ENCODE measurements at regions of chr6 and their contacts with region 1.

Region 1: DNA sequence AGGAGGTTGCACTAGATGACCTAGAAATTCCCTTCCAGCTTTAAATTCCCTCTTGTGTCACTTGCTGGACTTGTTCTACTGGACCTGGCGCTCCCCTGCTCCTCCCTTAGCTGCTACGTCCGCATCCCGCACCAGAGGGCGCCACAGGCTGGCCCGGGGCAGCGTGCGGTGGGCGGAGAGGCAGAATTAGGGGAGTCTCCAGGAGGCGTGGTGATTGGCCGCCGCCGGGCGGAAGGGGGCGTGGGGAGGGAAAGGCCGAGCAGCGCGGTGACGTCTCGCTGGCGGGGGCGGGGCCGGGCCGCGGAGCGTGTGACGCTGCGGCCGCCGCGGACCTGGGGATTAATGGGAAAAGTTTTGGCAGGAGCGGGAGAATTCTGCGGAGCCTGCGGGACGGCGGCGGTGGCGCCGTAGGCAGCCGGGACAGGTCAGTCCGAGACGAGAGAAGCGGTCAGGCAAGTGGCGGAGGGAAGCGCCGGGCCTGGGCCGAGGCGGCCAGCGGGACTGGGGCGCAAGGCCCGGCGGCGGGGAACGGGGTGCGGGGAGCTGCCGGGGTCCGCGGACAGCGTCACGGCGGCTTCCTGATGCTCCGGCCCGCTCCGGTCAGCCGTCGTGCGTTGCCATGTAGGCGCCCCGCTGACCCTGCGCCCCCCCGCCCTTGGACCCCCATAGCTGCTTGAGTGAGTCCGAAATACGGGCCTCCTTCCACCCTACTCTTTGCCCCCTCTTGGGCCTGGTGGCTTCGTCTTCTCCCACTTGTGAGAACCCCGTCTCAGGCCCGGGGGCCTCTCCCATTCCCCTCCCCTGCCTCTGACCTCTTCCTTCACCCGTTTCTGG is at the start of gene PPARD:
- DNase-seq: peak; percentile 100
- H3K4me3 Mint-ChIP-seq: peak within 1 kb of the TSS; percentile 96
- H3K27ac Mint-ChIP-seq: peak within 1 kb of the TSS; percentile 91
- H3K4me1 Mint-ChIP-seq: peaks cover 40% of the 10 kb centered on the region
- H3K27me3 Mint-ChIP-seq: peaks cover 2% of the 10 kb centered on the region
- total RNA-seq, gene PPARD: 19.0 TPM in 2 replicates

Region 2: GRCh38 chr6:35370124-35370741 is 27.8 kb after region 1 on chr6:
- intact Hi-C with region 1: loop called (anchors 1 kb)
- DNase-seq: peak; percentile 78
- H3K4me3 Mint-ChIP-seq: peak overlapping the region; percentile 79
- H3K27ac Mint-ChIP-seq: peak overlapping the region; percentile 96
- H3K4me1 Mint-ChIP-seq: peaks cover 55% of the 10 kb centered on the region
- H3K27me3 Mint-ChIP-seq: no peaks in the 10 kb centered on the region

Region 3: GRCh38 chr6:35415065-35415991 is 72.9 kb after region 1 on chr6:
- intact Hi-C with region 1: loop called (anchors 2 kb)
- DNase-seq: peak; percentile 78
- H3K4me3 Mint-ChIP-seq: peak overlapping the region; percentile 39
- H3K27ac Mint-ChIP-seq: peak overlapping the region; percentile 64
- H3K4me1 Mint-ChIP-seq: peaks cover 65% of the 10 kb centered on the region
- H3K27me3 Mint-ChIP-seq: no peaks in the 10 kb centered on the region

Region 4: DNA sequence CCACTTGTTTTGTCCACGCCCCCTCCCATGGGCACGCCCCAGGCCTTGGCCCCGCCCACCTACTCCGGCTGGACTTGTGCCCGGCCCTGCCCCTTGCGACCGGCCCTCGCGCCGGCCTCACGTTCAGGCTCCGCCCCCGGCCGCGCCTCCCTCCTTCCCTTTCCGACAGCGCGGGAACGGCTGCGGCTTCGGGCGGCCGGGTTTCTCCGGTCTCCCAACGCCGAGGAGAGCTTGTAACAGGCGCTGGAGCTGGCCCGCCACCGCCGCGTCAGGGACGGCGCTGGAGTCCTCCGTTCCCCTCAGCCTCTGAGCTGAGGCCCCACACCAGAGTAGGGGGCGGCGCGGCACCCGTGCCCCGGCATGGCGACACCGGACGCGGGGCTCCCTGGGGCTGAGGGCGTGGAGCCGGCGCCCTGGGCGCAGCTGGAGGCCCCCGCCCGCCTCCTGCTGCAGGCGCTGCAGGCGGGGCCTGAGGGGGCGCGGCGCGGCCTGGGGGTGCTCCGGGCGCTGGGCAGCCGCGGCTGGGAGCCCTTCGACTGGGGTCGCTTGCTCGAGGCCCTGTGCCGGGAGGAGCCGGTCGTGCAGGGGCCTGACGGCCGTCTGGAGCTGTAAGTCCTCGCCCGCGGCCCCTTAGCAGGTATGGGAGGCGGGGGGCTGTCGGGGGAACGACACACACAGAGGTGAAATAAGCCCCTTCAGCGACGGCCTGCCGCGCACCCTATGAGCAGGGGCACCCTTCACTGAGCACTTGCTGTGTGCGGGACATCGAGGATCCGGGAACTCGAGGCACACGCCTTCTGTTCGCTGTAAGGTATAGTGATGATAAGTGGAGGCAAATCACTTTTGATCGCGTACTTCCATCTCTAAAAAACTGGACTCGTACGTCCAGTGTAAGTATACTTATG is 110.0 kb after region 1 on chr6 and contains the start of gene FANCE:
- intact Hi-C with region 1: loop called (anchors 1 kb)
- DNase-seq: peak; percentile 99
- H3K4me3 Mint-ChIP-seq: peak within 1 kb of the TSS; percentile 86
- H3K27ac Mint-ChIP-seq: peak within 1 kb of the TSS; percentile 66
- H3K4me1 Mint-ChIP-seq: peaks cover 35% of the 10 kb centered on the region
- H3K27me3 Mint-ChIP-seq: peaks cover 9% of the 10 kb centered on the region
- total RNA-seq, gene FANCE: 19.6 and 22.1 TPM in 2 replicates

Region 5: DNA sequence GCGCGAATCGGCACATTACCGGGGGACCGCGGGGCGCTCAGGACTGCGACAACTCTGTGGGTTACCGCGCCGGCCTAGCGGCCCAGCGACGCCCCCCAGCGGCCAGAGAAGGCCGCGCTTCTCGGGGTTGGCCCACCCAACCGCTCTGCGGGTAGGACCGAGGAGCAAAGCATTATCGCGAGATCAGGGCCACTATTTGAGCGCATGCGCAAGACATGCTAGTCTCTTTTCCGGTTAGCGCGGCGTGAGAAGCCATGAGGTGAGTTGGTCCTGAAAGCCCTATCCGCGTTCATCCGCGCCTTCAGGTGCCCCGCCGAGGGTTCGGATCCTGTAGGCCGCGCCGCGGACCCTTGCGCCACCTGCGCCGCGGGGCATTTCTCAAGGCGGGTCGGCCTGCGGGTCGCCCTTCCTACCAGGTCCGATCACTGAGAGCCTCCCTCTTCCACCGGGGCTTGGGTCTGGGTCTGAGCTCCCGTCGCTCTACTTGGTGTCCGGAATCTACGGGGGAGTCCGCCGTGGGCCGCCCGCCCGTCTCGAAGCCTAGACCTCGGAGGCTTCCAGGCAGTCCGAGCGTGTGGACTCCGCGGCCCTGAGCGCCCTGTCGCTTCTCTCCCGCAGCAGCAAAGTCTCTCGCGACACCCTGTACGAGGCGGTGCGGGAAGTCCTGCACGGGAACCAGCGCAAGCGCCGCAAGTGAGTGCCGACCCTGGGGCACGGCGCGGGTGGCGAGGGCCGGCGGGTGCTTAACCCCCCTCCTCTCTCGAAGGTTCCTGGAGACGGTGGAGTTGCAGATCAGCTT is 125.9 kb after region 1 on chr6 and contains the start of gene RPL10A:
- intact Hi-C with region 1: loop called (anchors 1 kb)
- DNase-seq: peak; percentile 98
- H3K4me3 Mint-ChIP-seq: peak within 1 kb of the TSS; percentile 97
- H3K27ac Mint-ChIP-seq: peak within 1 kb of the TSS; percentile 98
- H3K4me1 Mint-ChIP-seq: peaks cover 39% of the 10 kb centered on the region
- H3K27me3 Mint-ChIP-seq: no peaks in the 10 kb centered on the region
- total RNA-seq, gene RPL10A: 1,702 and 1,710 TPM in 2 replicates

Region 6: DNA sequence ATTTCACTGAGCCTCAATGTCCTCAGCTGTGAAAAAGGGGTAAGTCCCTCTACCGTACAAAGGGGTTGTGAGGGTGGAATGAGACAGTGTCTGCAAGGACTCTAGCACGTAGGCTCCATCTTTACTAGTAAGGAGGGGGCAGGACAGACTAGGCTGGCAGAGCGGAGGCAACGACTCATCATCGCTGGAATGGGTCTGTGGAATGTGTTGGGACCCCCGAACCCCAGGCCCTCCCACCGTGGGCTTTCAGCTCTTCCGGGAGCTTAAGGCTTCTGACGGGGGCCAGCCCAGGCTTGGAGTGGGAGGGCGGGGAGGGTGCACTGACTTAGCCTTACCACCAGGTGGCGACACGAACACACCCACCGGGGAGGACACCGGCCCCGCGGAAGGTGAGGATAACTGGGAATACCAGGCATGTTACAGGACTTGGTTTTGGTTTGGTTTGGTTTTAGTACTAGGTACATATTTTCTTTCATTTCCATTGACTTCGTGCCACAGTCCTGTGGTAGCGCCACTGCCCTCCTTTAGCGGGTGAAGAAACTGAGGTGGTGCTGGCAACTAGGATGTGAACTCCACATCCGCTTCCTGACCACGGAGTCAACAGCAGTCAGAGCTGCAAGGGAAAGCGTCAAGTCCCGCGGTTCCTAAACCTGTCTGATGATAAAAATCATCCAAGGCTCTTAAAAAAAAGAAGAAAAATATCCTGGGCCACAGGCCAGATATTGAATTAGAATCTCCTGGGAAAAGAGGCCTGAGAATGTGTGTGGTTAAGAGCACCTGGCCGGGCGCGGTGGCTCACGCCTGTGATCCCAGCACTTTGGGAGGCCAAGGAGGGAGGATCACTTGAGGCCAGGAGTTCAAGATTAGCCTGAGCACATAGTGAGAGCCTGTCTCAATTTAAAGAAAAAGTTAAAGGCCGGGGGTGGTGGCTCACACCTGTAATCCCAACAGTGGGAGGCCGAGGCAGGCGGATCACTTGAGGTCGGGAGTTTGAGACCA is 180.5 kb after region 1 on chr6:
- intact Hi-C with region 1: no loop called
- DNase-seq: peak; percentile 89
- H3K4me3 Mint-ChIP-seq: peak overlapping the region; percentile 73
- H3K27ac Mint-ChIP-seq: peak overlapping the region; percentile 64
- H3K4me1 Mint-ChIP-seq: peaks cover 16% of the 10 kb centered on the region
- H3K27me3 Mint-ChIP-seq: peaks cover 5% of the 10 kb centered on the region